ENCODE measurements at regions of chr1 and their contacts with region 1.

Region 1: GRCh38 chr1:68010090-68010489 is 40.3 kb downstream of the DIRAS3 start:
- DNase-seq: no peak
- ATAC-seq: no peak
- H3K4me3 ChIP-seq: no peak overlapping the region
- H3K27ac ChIP-seq: no peak overlapping the region
- H3K4me1 ChIP-seq: no peaks in the 10 kb centered on the region
- H3K27me3 ChIP-seq: no peaks in the 10 kb centered on the region

Region 2: DNA sequence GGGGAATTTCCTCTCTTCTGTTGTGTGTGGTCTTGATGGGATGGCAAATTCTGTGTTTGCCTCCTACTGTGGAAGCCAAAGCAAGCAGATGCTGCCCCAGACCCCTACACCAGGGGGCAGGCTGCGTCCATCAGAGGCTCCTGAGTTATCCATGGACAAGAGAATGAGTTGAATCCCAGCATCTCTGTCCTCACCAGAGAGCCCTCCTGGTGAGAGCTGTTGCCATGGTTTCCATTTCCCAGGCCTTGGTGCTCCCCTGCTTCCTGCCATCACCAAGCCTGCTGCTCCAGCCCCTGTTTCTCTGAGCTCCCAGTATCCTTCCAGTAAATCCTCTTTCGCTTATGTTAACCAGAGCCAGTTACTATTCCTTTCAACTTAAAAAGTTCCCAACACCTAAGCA is 156.4 kb before region 1 on chr1:
- intact Hi-C with region 1: loop called in 1 of 2 experiments (anchors 10 kb)
- DNase-seq: peak; percentile 54 to 79
- ATAC-seq: no peak
- H3K4me3 ChIP-seq: no peak overlapping the region
- H3K27ac ChIP-seq: no peak overlapping the region
- H3K4me1 ChIP-seq: peaks cover 2 to 3% of the 10 kb centered on the region in 2 donors
- H3K27me3 ChIP-seq: no peaks in the 10 kb centered on the region

Region 3: DNA sequence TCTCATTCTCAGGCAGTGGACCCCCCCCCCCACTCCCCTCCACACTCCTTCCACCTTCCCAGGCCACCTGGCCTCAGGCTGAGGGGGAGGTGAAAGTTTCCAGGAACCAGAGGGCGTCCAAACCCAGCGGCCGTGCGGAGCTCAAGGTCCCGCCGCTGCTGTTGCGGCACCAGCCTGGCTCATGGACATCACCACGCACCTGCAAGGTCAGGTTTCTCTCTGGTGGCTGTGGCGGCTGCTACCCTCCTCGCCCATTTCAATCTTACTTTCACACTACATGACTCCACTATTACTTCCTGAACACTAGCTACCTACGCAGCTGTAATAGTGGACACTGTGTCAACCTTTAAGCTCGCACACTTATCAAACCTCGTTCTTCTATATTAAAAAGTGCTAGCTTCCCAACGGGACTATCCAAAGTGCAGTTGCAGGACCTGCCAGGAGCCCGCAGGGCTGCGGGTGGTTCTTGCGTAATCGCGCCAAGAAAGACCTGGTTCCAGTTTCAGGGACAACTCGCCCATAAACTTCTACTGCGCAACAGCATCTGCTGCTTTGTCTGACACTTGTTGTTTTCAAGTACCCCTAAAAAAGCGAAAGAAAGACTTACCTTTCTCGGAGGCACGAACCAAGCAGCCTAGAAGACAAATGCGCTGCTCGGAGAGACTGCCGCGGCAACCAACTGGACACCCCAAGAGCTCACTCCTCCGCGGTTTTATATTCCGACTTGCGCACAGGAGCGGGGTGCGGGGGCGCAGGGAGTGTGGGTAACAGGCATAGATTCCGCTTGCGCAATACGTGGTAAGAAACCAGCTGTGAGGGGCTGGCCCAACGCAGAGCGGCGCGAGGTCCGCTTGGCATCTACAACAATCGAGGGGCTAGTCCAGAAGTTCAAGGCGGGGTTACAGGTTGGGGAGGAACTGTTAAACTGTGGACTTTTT is 40.1 kb after region 1 on chr1 and contains the start of gene DIRAS3:
- intact Hi-C with region 1: no loop called
- DNase-seq: peak; percentile 50 to 75
- ATAC-seq: peak; percentile 68
- H3K4me3 ChIP-seq: peak within 1 kb of the TSS; percentile 7 to 49
- H3K27ac ChIP-seq: no peak within 1 kb of the TSS
- H3K4me1 ChIP-seq: no peaks in the 10 kb centered on the region
- H3K27me3 ChIP-seq: no peaks in the 10 kb centered on the region
- total RNA-seq, gene DIRAS3: 2.1 to 2.2 TPM

Measured in aorta (tissue), 5 donors.